ENCODE measurements at regions of chr13 and their contacts with region 1.

Region 1: DNA sequence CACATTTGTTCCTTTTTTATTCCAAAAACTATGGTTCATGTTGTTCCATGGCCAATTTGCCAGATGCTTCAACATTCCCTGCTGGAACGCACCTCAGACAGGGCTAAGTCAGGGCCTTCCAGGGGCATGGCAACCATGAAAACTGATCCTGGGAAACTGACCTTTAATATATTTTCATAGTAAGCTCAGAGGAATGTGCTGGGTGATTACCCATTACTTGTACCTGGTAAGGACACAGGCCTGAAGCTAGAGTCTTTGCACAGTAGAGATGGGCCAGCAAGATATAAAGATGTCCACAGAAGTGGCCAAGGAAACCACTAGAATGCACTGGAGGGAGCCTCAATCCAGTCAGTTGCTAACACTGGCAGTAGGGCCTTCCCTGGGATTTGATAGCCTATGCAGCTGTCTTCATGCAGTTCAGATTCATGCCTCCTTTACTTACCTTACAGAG is 353.1 kb downstream of the ENOX1 start:
- DNase-seq: peak; percentile 33
- ATAC-seq: no peak; the same call in 1 of the 2 replicates
- H3K4me3 ChIP-seq: no peak overlapping the region
- H3K27ac ChIP-seq: peak overlapping the region; percentile 8; the same call in 1 of the 2 replicates
- H3K4me1 ChIP-seq: peaks cover 13% of the 10 kb centered on the region
- H3K27me3 ChIP-seq: no peaks in the 10 kb centered on the region
- CTCF ChIP-seq: no peak

Region 2: GRCh38 chr13:43107780-43108179 is 325.9 kb before region 1 on chr13:
- CTCF ChIA-PET with region 1: no interaction called
- POLR2A ChIA-PET with region 1: no interaction called
- intact Hi-C with region 1: no loop called
- DNase-seq: peak; percentile 53
- ATAC-seq: peak; percentile 87
- H3K4me3 ChIP-seq: no peak overlapping the region
- H3K27ac ChIP-seq: peak overlapping the region; percentile 3; the same call in 1 of the 2 replicates
- H3K4me1 ChIP-seq: peaks cover 13% of the 10 kb centered on the region
- H3K27me3 ChIP-seq: no peaks in the 10 kb centered on the region
- CTCF ChIP-seq: no peak

Region 3: DNA sequence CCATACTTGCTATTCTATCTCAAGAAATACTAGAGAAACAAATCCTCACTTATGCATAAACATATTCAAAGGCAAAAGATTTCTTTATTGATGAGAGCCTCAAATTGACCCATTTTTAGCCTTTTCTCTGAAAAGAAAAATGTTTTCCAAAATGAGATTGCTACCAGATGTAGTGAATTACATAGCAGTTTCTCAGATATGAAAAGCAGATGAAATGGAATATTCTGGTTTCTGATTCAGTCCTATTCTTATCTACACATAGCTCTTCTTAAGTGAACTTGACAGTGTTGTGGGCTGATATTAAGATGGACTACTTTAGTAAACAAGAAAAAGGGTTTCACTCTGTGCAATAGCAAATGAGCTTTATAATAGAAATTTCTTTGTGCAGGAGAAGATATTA is 226.9 kb before region 1 on chr13:
- CTCF ChIA-PET with region 1: no interaction called
- POLR2A ChIA-PET with region 1: no interaction called
- intact Hi-C with region 1: no loop called
- DNase-seq: no peak
- ATAC-seq: no peak
- H3K4me3 ChIP-seq: no peak overlapping the region
- H3K27ac ChIP-seq: no peak overlapping the region
- H3K4me1 ChIP-seq: peaks cover 14% of the 10 kb centered on the region
- H3K27me3 ChIP-seq: no peaks in the 10 kb centered on the region
- CTCF ChIP-seq: no peak

Region 4: DNA sequence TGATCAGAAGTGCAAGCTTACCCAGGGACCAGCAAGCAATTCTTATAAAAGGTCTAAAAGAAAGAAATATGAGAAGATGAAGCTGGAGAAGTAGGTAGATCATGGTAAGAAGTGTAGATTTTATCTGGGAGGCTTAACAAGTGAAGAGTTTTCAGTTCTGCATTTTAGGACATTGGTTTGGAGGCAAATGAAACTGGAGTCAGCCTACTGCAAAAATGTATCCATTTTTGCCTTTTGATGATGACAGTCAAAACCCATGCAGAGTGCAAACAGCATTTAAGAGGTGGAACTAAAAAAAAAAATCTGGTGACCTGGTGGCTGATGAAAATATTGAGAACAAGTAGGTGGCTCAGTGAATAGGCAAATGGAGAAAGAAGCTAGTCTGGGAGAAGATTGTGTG is 193.4 kb before region 1 on chr13:
- CTCF ChIA-PET with region 1: no interaction called
- POLR2A ChIA-PET with region 1: no interaction called
- intact Hi-C with region 1: no loop called
- DNase-seq: no peak
- ATAC-seq: no peak
- H3K4me3 ChIP-seq: no peak overlapping the region
- H3K27ac ChIP-seq: no peak overlapping the region
- H3K4me1 ChIP-seq: peaks cover 13% of the 10 kb centered on the region
- H3K27me3 ChIP-seq: no peaks in the 10 kb centered on the region
- CTCF ChIP-seq: no peak

Region 5: GRCh38 chr13:43473437-43473836 is 39.7 kb after region 1 on chr13:
- CTCF ChIA-PET with region 1: interaction called, 11 read pairs
- POLR2A ChIA-PET with region 1: no interaction called
- intact Hi-C with region 1: no loop called
- DNase-seq: no peak
- ATAC-seq: no peak
- H3K4me3 ChIP-seq: no peak overlapping the region
- H3K27ac ChIP-seq: no peak overlapping the region
- H3K4me1 ChIP-seq: no peaks in the 10 kb centered on the region
- H3K27me3 ChIP-seq: no peaks in the 10 kb centered on the region
- CTCF ChIP-seq: no peak

Region 6: DNA sequence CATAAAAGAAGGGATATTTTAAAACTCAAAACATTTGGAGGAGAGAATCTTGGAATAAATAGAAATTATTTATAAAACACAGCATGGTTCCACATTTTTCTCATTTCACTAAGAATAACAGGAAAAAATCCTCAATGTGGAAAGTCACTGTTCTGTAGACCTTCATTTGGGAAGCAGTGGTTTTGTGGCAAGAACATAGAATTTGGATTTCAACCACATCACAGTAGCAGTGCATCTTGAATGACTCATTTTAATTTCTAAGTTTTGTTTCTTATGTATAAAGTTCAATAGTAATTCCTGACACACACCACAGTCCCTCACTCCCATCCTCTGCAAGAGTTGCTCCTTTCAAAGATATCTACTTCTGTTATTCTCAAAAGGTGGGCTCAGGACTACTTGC is 89.1 kb after region 1 on chr13:
- CTCF ChIA-PET with region 1: no interaction called
- POLR2A ChIA-PET with region 1: no interaction called
- intact Hi-C with region 1: loop called (anchors 10 kb)
- DNase-seq: no peak
- ATAC-seq: peak; percentile 38
- H3K4me3 ChIP-seq: no peak overlapping the region
- H3K27ac ChIP-seq: no peak overlapping the region
- H3K4me1 ChIP-seq: no peaks in the 10 kb centered on the region
- H3K27me3 ChIP-seq: no peaks in the 10 kb centered on the region
- CTCF ChIP-seq: no peak

Region 7: GRCh38 chr13:43546251-43546650 is 112.5 kb after region 1 on chr13:
- CTCF ChIA-PET with region 1: no interaction called
- POLR2A ChIA-PET with region 1: no interaction called
- intact Hi-C with region 1: no loop called
- DNase-seq: no peak
- ATAC-seq: no peak
- H3K4me3 ChIP-seq: no peak overlapping the region
- H3K27ac ChIP-seq: no peak overlapping the region
- H3K4me1 ChIP-seq: peaks cover 19% of the 10 kb centered on the region
- H3K27me3 ChIP-seq: no peaks in the 10 kb centered on the region
- CTCF ChIP-seq: no peak

Measured in PC-3 (cell line).